AG04450 (cell line): ENCODE measurements at regions of chr5 and their contacts with region 1.

Region 1: GRCh38 chr5:177473461-177474001 is at the start of gene DBN1:
- DNase-seq: no peak
- H3K4me3 ChIP-seq: peak within 1 kb of the TSS; percentile 92
- H3K27ac ChIP-seq: peak within 1 kb of the TSS; percentile 68
- H3K27me3 ChIP-seq: no peaks in the 10 kb centered on the region
- CTCF ChIP-seq: no peak
- polyA plus RNA-seq, gene DBN1: 146 and 164 TPM in 2 replicates

Region 2: GRCh38 chr5:177462021-177462670 is 11.4 kb before region 1 on chr5:
- CTCF ChIA-PET with region 1: interaction called, 13 read pairs
- POLR2A ChIA-PET with region 1: interaction called, 20 read pairs
- DNase-seq: no peak
- H3K4me3 ChIP-seq: no peak overlapping the region
- H3K27ac ChIP-seq: no peak overlapping the region
- H3K27me3 ChIP-seq: no peaks in the 10 kb centered on the region
- CTCF ChIP-seq: no peak

Region 3: GRCh38 chr5:178331399-178331996 is 858.0 kb after region 1 on chr5:
- CTCF ChIA-PET with region 1: no interaction called
- POLR2A ChIA-PET with region 1: no interaction called
- DNase-seq: no peak
- H3K4me3 ChIP-seq: no peak overlapping the region
- H3K27ac ChIP-seq: no peak overlapping the region
- H3K27me3 ChIP-seq: no peaks in the 10 kb centered on the region
- CTCF ChIP-seq: no peak